Ascending aorta (tissue), 2 donors: ENCODE measurements at regions of chr17 and their contacts with region 1.

Region 1: GRCh38 chr17:32006957-32007462 is at the start of gene LRRC37B:
- DNase-seq: peak; percentile 51 to 93
- H3K4me3 ChIP-seq: peak within 1 kb of the TSS; percentile 87 to 95
- H3K27ac ChIP-seq: peak within 1 kb of the TSS; percentile 62 to 92
- H3K4me1 ChIP-seq: peaks cover 5 to 15% of the 10 kb centered on the region in 2 donors
- H3K27me3 ChIP-seq: no peaks in the 10 kb centered on the region
- CTCF ChIP-seq: peak; percentile 91 to 98 (median 98)
- total RNA-seq, gene LRRC37B: 0.75 TPM

Region 2: GRCh38 chr17:31231852-31232251 is 775.2 kb before region 1 on chr17:
- intact Hi-C with region 1: no loop called
- DNase-seq: no peak
- H3K4me3 ChIP-seq: no peak overlapping the region
- H3K27ac ChIP-seq: no peak overlapping the region
- H3K4me1 ChIP-seq: no peaks in the 10 kb centered on the region
- H3K27me3 ChIP-seq: no peaks in the 10 kb centered on the region
- CTCF ChIP-seq: no peak

Region 3: GRCh38 chr17:32142038-32142856 is 135.2 kb after region 1 on chr17 and contains the start of gene RHOT1:
- intact Hi-C with region 1: loop called (anchors 2 kb)
- DNase-seq: peak; percentile 38 to 86
- H3K4me3 ChIP-seq: peak within 1 kb of the TSS; percentile 96 to 97
- H3K27ac ChIP-seq: peak within 1 kb of the TSS; percentile 86 to 88
- H3K4me1 ChIP-seq: peaks cover 0 to 14% of the 10 kb centered on the region in 2 donors
- H3K27me3 ChIP-seq: no peaks in the 10 kb centered on the region
- CTCF ChIP-seq: peak; percentile 37 to 70 (median 55)
- total RNA-seq, gene RHOT1: 17.2 TPM